Heart right ventricle (tissue), 16 donors: ENCODE measurements at regions of chr18 and their contacts with region 1.

Region 1: DNA sequence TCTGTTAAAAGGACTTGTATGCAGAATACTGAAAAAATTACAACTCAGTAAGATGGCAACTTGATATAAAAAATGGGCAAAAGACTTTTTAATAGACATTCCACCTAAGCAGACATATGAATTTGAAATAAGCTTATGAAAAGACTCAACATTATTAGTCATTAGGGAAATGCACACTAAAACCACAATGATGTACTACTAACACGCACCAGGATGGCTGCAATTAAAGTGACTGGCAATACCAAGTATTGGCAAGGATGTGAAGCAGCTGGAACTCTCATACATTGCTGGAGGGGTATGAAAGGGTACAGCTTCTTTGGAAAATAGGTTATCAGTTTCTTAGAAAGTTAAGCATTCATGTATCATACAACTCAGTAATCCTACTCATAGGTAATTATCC is 3.2 kb upstream of the ENOSF1 start:
- DNase-seq: no peak
- ATAC-seq: no peak
- H3K4me3 ChIP-seq: no peak overlapping the region
- H3K27ac ChIP-seq: no peak overlapping the region
- H3K4me1 ChIP-seq: peaks cover 0 to 12% (median 10%) of the 10 kb centered on the region in 9 donors
- H3K27me3 ChIP-seq: no peaks in the 10 kb centered on the region
- CTCF ChIP-seq: no peak

Region 2: GRCh38 chr18:519019-519879 is 196.4 kb before region 1 on chr18:
- intact Hi-C with region 1: no loop called
- DNase-seq: peak; percentile 62 to 71
- ATAC-seq: peak; percentile 80 to 91 (median 86)
- H3K4me3 ChIP-seq: no peak overlapping the region
- H3K27ac ChIP-seq: peak overlapping the region in 8 of 10 donors; percentile 1 to 67 (median 34)
- H3K4me1 ChIP-seq: peaks cover 0 to 15% (median 9%) of the 10 kb centered on the region in 9 donors
- H3K27me3 ChIP-seq: no peaks in the 10 kb centered on the region
- CTCF ChIP-seq: no peak

Region 3: DNA sequence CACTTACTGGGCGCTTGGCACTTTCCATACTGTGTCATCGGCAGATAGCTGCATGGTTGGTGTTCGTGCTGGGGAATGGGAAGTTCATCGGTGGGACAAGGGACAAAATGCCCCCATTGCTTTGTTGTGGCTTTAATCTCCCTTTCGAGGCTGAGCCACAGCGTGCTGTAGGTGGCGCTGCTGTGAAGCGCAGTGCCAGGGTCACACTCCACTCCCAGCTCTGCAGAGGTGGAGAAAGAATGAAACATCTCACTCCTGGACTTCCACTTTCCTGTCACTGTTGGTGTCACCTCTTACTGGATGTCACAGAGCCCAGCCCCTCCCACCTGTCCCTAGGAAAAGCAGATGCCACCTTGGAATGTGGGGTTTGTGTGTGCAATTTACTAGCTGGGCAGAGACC is 49.4 kb before region 1 on chr18:
- intact Hi-C with region 1: no loop called
- DNase-seq: no peak
- ATAC-seq: peak in 1 of 8 donors; percentile 39
- H3K4me3 ChIP-seq: no peak overlapping the region
- H3K27ac ChIP-seq: no peak overlapping the region
- H3K4me1 ChIP-seq: no peaks in the 10 kb centered on the region
- H3K27me3 ChIP-seq: no peaks in the 10 kb centered on the region
- CTCF ChIP-seq: peak in 2 of 9 donors; percentile 7 to 11

Region 4: DNA sequence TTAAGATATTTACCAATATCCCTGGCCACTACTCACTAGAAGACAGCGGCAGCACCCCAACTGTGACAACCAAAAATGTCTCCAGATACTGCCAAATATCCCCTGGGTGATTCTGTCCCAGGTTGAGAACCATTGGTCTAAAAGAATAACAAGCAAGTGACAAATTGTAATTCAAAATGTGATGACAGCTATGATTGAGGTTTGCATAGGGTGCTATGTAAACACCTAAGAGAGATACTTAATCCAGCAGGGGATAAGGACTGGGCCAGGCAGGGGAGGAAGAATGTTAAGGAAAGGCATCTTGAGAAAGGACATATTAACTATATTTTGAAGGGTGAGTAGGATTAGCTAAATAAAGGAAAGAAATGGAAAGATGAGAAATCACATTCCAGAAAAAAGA is 34.8 kb after region 1 on chr18:
- intact Hi-C with region 1: no loop called
- DNase-seq: no peak
- ATAC-seq: no peak
- H3K4me3 ChIP-seq: no peak overlapping the region
- H3K27ac ChIP-seq: no peak overlapping the region
- H3K4me1 ChIP-seq: peaks cover 0 to 5% (median 0%) of the 10 kb centered on the region in 9 donors
- H3K27me3 ChIP-seq: no peaks in the 10 kb centered on the region
- CTCF ChIP-seq: no peak

Region 5: DNA sequence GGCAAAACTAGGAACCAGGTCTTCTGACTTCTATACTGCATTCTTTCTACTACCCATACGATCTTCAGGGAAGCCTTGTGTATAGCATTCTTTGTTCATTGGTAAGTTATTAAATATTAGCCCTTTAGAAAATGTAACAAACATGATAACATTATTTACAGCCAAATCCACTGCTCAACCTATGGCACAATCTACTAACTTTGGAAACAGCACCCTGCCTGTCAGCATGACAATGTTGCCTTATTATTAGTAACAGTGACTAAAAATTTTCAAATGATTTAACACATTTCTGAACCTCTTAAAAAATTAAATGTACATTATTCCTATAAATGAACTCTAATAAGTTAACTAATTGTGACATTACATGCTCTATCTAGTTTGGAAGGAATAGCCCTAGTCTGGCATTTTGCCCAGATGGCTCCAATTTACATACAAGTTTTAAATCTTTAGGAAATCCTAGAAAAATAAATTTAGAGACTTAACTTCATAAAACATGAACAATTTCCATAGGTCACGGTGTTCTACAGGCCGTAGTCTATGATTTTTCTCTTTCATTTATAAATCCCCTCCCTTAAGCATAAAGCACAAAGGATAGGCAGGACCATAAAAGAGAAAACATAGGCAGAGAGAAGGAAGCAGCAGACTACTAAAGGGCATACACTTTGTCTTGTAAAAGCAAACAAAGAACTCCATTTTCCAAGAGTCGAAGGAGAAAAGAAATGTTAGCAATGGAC is 62.7 kb after region 1 on chr18:
- intact Hi-C with region 1: loop called in 1 of 10 experiments (anchors 2 kb)
- DNase-seq: no peak
- ATAC-seq: peak in 1 of 8 donors; percentile 43
- H3K4me3 ChIP-seq: no peak overlapping the region
- H3K27ac ChIP-seq: no peak overlapping the region
- H3K4me1 ChIP-seq: peaks cover 0 to 34% (median 17%) of the 10 kb centered on the region in 9 donors
- H3K27me3 ChIP-seq: no peaks in the 10 kb centered on the region
- CTCF ChIP-seq: no peak

Region 6: GRCh38 chr18:1213126-1213525 is 497.5 kb after region 1 on chr18:
- intact Hi-C with region 1: no loop called
- DNase-seq: no peak
- ATAC-seq: no peak
- H3K4me3 ChIP-seq: no peak overlapping the region
- H3K27ac ChIP-seq: no peak overlapping the region
- H3K4me1 ChIP-seq: no peaks in the 10 kb centered on the region
- H3K27me3 ChIP-seq: peaks cover 0 to 2% (median 0%) of the 10 kb centered on the region in 7 donors
- CTCF ChIP-seq: no peak